ENCODE measurements at regions of chr13 and their contacts with region 1.

Region 1: DNA sequence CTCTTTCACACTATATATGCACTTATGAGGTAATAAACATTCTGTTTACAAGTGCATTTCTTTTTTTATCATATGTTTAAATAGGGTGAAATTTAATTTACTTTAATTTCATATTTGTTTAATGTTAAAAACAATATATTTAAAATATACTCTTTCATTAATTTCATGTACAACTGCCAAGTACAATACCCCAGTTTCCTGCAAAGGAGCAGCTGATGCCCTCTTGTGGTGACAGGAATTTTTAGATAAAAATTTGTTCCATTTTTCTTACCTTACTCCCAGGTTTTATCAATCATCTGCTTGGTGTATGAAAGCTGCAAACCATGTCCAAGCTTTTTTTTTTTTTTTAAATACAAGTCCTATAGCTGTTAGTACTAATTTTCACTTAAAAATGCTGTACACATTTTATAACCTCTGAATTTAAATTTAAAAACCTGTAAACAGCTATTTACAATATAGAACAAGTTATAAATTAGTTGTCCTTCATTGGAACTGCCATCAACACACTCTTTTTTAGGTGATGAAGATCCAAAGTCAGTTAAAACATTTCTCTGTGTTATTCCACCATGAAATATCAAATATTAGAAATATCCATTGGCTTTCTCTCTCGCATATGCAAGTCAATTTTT is 4.9 kb downstream of the PCDH20 start:
- DNase-seq: no peak
- H3K4me3 Mint-ChIP-seq: no peak overlapping the region
- H3K27ac Mint-ChIP-seq: no peak overlapping the region
- H3K4me1 Mint-ChIP-seq: no peaks in the 10 kb centered on the region
- H3K27me3 Mint-ChIP-seq: peaks cover 35% of the 10 kb centered on the region

Region 2: GRCh38 chr13:60448907-60449510 is 961.8 kb before region 1 on chr13:
- CTCF ChIA-PET with region 1: no interaction called
- intact Hi-C with region 1: loop called (anchors 1 kb)
- DNase-seq: peak; percentile 30
- H3K4me3 Mint-ChIP-seq: no peak overlapping the region
- H3K27ac Mint-ChIP-seq: no peak overlapping the region
- H3K4me1 Mint-ChIP-seq: no peaks in the 10 kb centered on the region
- H3K27me3 Mint-ChIP-seq: no peaks in the 10 kb centered on the region

Region 3: DNA sequence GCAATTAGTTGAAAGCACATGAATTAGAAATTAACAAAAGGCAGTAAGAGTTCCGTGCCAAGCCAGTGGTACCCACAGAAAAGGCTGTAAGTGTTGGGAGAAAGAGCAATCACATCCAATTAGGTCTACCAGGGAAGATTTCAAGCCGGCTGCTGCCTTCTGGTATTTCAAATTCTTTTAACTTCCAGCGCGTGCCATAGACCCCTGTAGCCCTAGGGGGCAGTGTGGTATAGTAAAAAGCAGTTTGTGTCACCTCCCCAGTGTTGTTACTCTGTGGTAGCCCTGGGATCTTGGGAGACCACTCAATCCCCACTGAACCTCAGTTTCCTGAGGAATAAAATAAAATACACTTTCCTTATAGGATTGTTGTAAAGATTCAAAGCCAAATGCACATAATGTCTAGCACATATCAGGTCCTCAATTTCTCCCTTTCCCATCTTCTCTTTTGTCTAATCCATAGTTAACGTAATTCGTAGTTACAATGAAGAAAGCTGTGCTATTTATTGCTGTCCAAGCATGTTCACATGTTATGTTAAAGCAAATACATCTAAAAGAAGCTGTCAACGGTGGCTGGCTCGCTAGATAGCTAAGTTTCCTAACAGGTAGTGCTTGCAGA is 783.6 kb before region 1 on chr13:
- CTCF ChIA-PET with region 1: no interaction called
- intact Hi-C with region 1: loop called (anchors 1 kb)
- DNase-seq: peak; percentile 31
- H3K4me3 Mint-ChIP-seq: no peak overlapping the region
- H3K27ac Mint-ChIP-seq: no peak overlapping the region
- H3K4me1 Mint-ChIP-seq: no peaks in the 10 kb centered on the region
- H3K27me3 Mint-ChIP-seq: peaks cover 15% of the 10 kb centered on the region

Region 4: GRCh38 chr13:61128850-61129645 is 281.7 kb before region 1 on chr13:
- CTCF ChIA-PET with region 1: no interaction called
- intact Hi-C with region 1: loop called (anchors 5 kb)
- DNase-seq: no peak
- H3K4me3 Mint-ChIP-seq: no peak overlapping the region
- H3K27ac Mint-ChIP-seq: no peak overlapping the region
- H3K4me1 Mint-ChIP-seq: no peaks in the 10 kb centered on the region
- H3K27me3 Mint-ChIP-seq: no peaks in the 10 kb centered on the region